ENCODE measurements at regions of chr1 and their contacts with region 1.

Region 1: DNA sequence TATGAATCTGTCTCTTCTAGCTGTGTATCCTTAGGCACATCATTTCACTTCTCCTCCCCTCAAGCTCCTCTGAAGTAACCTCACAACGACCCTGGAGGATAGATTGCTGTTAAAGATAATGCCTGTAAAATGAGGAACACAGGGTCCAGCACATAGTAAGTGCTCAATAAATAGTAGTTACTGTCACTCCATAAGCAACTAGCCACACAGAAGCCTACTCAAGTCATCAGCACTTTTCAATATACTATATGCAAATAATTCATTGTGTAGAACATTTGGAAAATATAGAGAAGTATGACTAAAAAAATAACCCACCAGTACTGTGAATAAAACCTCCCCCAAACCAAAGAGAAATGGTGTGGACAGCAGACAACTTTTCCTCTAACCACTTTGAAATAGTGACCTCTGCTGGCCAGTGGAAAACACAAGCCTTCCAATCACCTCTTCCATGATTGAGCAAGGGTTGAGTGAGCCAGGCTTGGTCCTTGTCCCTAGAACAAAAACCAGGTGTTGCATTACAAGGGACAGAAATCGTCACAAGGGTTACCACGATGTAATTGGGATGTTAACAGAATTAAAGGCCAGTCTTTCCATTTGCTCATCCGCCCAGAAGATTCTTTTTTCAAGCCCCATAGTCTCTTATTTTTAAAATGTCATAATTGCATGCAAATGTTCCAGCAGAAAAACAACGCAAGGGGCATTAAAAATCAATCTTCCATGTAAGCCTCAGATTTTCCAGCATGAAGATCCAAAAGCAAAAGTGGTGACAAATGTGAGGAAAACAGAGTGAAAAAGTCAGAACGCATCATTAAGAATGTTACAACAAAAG is 15.7 kb upstream of the GLIS1 start:
- DNase-seq: peak; percentile 77
- H3K4me3 Mint-ChIP-seq: no peak overlapping the region
- H3K27ac Mint-ChIP-seq: no peak overlapping the region
- H3K4me1 Mint-ChIP-seq: no peaks in the 10 kb centered on the region
- H3K27me3 Mint-ChIP-seq: peaks cover 1% of the 10 kb centered on the region
- CTCF ChIP-seq: peak; percentile 75

Region 2: GRCh38 chr1:53172426-53173128 is 582.1 kb before region 1 on chr1:
- CTCF ChIA-PET with region 1: no interaction called
- POLR2A ChIA-PET with region 1: no interaction called
- intact Hi-C with region 1: no loop called
- DNase-seq: peak; percentile 46
- H3K4me3 Mint-ChIP-seq: no peak overlapping the region
- H3K27ac Mint-ChIP-seq: no peak overlapping the region
- H3K4me1 Mint-ChIP-seq: peaks cover 8% of the 10 kb centered on the region
- H3K27me3 Mint-ChIP-seq: peaks cover 32% of the 10 kb centered on the region
- CTCF ChIP-seq: no peak

Region 3: DNA sequence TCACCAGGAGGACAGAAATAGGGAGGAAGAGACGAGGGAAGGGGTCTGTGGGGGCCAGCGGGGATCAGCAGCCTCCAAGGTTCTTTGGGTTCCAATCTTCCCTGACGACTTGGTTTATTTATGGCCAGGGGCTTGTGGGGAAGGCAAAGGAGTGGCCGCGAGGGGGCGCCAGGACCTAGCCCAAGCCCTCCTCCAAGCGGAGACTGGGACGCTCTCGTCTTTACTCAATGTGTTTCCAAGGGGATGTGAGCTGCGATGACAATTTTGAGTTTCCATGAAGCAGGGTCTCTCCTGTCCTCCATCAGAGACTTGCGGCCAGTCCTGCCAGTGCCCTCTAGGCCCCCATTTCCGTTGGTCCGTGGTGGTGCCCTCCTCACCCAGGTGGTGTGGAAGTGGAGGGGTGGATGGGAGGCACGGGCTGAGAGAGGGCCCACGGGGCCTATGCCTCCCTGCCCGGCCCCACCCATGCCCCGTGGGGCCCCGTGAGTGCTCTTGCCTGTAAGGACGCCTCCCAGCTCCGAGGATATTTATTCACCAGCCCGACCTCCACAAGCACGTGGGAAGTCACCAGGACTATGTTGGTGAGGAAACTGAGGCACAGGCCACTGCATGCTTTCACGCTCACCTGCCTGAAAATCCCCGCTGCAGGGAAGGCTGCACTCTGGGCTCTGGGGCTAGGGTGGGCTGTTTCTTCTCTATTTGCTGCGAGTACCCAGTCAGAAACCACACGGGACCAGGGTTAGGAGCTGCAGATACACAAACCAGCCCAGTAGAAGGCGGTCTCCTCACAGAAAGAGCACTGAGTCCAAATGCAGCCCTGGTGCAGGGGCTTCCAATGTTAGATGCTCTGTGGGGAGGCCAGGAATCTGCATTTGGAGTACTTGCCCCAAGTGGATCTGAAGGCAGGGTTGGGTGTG is 269.0 kb before region 1 on chr1:
- CTCF ChIA-PET with region 1: interaction called, 65 read pairs
- POLR2A ChIA-PET with region 1: no interaction called
- intact Hi-C with region 1: loop called (anchors 1 kb)
- DNase-seq: peak; percentile 79
- H3K4me3 Mint-ChIP-seq: no peak overlapping the region
- H3K27ac Mint-ChIP-seq: no peak overlapping the region
- H3K4me1 Mint-ChIP-seq: no peaks in the 10 kb centered on the region
- H3K27me3 Mint-ChIP-seq: peaks cover 49% of the 10 kb centered on the region
- CTCF ChIP-seq: peak; percentile 85

Region 4: GRCh38 chr1:53681977-53682685 is 72.6 kb before region 1 on chr1:
- CTCF ChIA-PET with region 1: no interaction called
- POLR2A ChIA-PET with region 1: no interaction called
- intact Hi-C with region 1: loop called (anchors 1 kb)
- DNase-seq: peak; percentile 59
- H3K4me3 Mint-ChIP-seq: no peak overlapping the region
- H3K27ac Mint-ChIP-seq: no peak overlapping the region
- H3K4me1 Mint-ChIP-seq: peaks cover 4% of the 10 kb centered on the region
- H3K27me3 Mint-ChIP-seq: peaks cover 52% of the 10 kb centered on the region
- CTCF ChIP-seq: peak; percentile 59

Region 5: GRCh38 chr1:53699981-53700380 is 54.7 kb before region 1 on chr1:
- CTCF ChIA-PET with region 1: interaction called, 11 read pairs
- POLR2A ChIA-PET with region 1: no interaction called
- intact Hi-C with region 1: no loop called
- DNase-seq: no peak
- H3K4me3 Mint-ChIP-seq: no peak overlapping the region
- H3K27ac Mint-ChIP-seq: no peak overlapping the region
- H3K4me1 Mint-ChIP-seq: no peaks in the 10 kb centered on the region
- H3K27me3 Mint-ChIP-seq: no peaks in the 10 kb centered on the region
- CTCF ChIP-seq: no peak

Region 6: DNA sequence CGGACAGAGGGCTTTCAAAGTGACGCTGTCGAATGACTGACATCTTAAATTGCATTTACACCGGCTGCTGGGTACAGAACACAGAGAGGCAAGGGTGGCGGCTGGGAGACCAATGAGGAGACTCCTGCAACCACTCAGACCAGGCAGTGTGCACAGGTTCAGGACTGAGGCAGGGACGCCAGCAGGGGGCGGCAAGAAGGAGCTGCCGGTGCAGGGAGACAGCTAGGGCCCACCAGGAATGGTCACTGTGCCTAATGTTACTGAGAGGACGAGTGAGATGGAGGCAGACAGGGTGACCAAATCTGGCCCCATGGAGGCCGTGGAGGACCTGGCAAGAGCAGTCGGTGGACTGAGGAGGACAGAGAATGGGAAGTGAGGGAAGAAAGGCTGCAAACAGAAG is 39.2 kb before region 1 on chr1:
- CTCF ChIA-PET with region 1: interaction called, 4 read pairs
- POLR2A ChIA-PET with region 1: no interaction called
- intact Hi-C with region 1: loop called (anchors 1 kb)
- DNase-seq: peak; percentile 40
- H3K4me3 Mint-ChIP-seq: no peak overlapping the region
- H3K27ac Mint-ChIP-seq: no peak overlapping the region
- H3K4me1 Mint-ChIP-seq: no peaks in the 10 kb centered on the region
- H3K27me3 Mint-ChIP-seq: no peaks in the 10 kb centered on the region
- CTCF ChIP-seq: peak; percentile 18

Region 7: GRCh38 chr1:53725238-53725689 is 29.4 kb before region 1 on chr1:
- CTCF ChIA-PET with region 1: interaction called, 13 read pairs
- POLR2A ChIA-PET with region 1: no interaction called
- intact Hi-C with region 1: no loop called
- DNase-seq: no peak
- H3K4me3 Mint-ChIP-seq: no peak overlapping the region
- H3K27ac Mint-ChIP-seq: no peak overlapping the region
- H3K4me1 Mint-ChIP-seq: no peaks in the 10 kb centered on the region
- H3K27me3 Mint-ChIP-seq: no peaks in the 10 kb centered on the region
- CTCF ChIP-seq: no peak